Vagina (tissue), 2 donors: ENCODE measurements at regions of chr4 and their contacts with region 1.

Region 1: GRCh38 chr4:16289897-16290554 is 63.8 kb upstream of the TAPT1 start:
- DNase-seq: no peak
- H3K4me3 ChIP-seq: no peak overlapping the region
- H3K27ac ChIP-seq: no peak overlapping the region
- H3K4me1 ChIP-seq: peaks cover 6% of the 10 kb centered on the region
- H3K27me3 ChIP-seq: no peaks in the 10 kb centered on the region
- CTCF ChIP-seq: peak; percentile 7 to 72 (median 65)
- POLR2A ChIP-seq: no peak

Region 2: GRCh38 chr4:17475481-17475880 is 1185.5 kb after region 1 on chr4:
- intact Hi-C with region 1: loop called (anchors 10 kb)
- DNase-seq: no peak
- H3K4me3 ChIP-seq: no peak overlapping the region
- H3K27ac ChIP-seq: no peak overlapping the region
- H3K4me1 ChIP-seq: no peaks in the 10 kb centered on the region
- H3K27me3 ChIP-seq: no peaks in the 10 kb centered on the region
- CTCF ChIP-seq: no peak
- POLR2A ChIP-seq: no peak